HepG2 (cell line): ENCODE measurements at regions of chr4 and their contacts with region 1.

Region 1: DNA sequence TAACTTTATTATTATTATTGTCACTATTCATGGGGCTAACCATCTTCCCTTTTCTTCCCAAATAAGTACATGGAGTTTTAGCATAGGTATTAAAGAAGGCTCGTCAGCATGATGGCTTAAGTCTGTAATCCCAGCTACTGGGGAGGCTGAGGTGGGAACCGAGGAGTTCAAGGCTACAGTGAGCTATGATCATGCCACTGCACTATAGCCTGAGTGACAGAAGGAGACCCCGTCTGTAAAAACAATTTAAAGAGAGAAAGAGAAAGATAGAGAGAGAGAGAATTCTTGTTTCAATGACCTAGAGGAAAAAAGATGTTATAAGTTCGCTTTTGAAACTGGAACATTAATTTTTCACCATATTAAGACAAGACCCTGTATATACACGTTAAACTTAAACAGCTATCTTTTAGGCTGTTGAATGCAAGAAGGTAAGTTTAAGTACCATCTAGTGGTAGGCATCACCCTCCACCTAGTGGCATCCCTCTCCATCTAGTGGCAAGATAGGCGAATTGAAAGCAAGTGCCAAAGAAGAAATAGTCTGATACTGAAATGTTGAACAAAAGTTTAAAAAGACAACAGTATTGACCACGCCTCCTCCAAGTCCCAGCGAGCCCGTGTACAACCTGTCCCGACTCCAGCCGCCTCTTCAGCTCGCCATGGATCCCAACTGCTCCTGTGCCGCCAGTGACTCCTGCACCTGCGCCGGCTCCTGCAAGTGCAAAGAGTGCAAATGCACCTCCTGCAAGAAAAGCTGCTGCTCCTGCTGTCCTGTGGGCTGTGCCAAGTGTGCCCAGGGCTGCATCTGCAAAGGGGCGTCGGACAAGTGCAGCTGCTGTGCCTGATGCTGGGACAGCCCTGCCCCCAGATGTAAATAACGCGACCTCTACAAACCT is 26.0 kb upstream of the YTHDC1 start:
- DNase-seq: peak; percentile 66
- ATAC-seq: peak; percentile 98
- H3K4me3 ChIP-seq: peak overlapping the region; percentile 15 to 63 (median 15); a peak in 3 of 6 replicates
- H3K27ac ChIP-seq: no peak overlapping the region
- H3K4me1 ChIP-seq: no peaks in the 10 kb centered on the region
- H3K27me3 ChIP-seq: no peaks in the 10 kb centered on the region
- CTCF ChIP-seq: peak; percentile 85
- EP300 ChIP-seq: no peak
- POLR2A ChIP-seq: no peak
- RAD21 ChIP-seq: peak; percentile 72

Region 2: GRCh38 chr4:68271851-68272756 is 103.8 kb before region 1 on chr4:
- CTCF ChIA-PET with region 1: interaction called, 27 read pairs
- POLR2A ChIA-PET with region 1: no interaction called
- in situ Hi-C with region 1: no loop called
- intact Hi-C with region 1: loop called (anchors 1 kb)
- DNase-seq: peak; percentile 56
- ATAC-seq: 0 out of 3 replicates have a peak, but pooled peaks have one; percentile 41
- H3K4me3 ChIP-seq: no peak overlapping the region
- H3K27ac ChIP-seq: no peak overlapping the region
- H3K4me1 ChIP-seq: peaks cover 8% of the 10 kb centered on the region; the same call in 1 of the 2 replicates
- H3K27me3 ChIP-seq: no peaks in the 10 kb centered on the region; a peak in 1 of 5 replicates
- CTCF ChIP-seq: peak; percentile 62
- EP300 ChIP-seq: no peak
- POLR2A ChIP-seq: no peak
- RAD21 ChIP-seq: peak; percentile 18; the same call in 1 of the 2 replicates